ENCODE measurements at regions of chr4 and their contacts with region 1.

Region 1: GRCh38 chr4:153318696-153319320 is 25.7 kb upstream of the MND1 start:
- DNase-seq: peak; percentile 40
- ATAC-seq: peak; percentile 58
- H3K4me3 Mint-ChIP-seq: no peak overlapping the region
- H3K27ac Mint-ChIP-seq: no peak overlapping the region
- H3K4me1 Mint-ChIP-seq: no peaks in the 10 kb centered on the region
- H3K27me3 Mint-ChIP-seq: no peaks in the 10 kb centered on the region

Region 2: GRCh38 chr4:152850377-152850776 is 468.4 kb before region 1 on chr4:
- CTCF ChIA-PET with region 1: interaction called, 3 read pairs
- POLR2A ChIA-PET with region 1: no interaction called
- intact Hi-C with region 1: loop called in 1 of 2 experiments (anchors 5 kb)
- DNase-seq: peak; percentile 64
- ATAC-seq: peak; percentile 69
- H3K4me3 Mint-ChIP-seq: no peak overlapping the region
- H3K27ac Mint-ChIP-seq: peak overlapping the region; percentile 40
- H3K4me1 Mint-ChIP-seq: peaks cover 22% of the 10 kb centered on the region
- H3K27me3 Mint-ChIP-seq: no peaks in the 10 kb centered on the region

Region 3: GRCh38 chr4:153142700-153143438 is 175.9 kb before region 1 on chr4:
- CTCF ChIA-PET with region 1: interaction called, 7 read pairs
- POLR2A ChIA-PET with region 1: no interaction called
- intact Hi-C with region 1: loop called (anchors 1 kb)
- DNase-seq: peak; percentile 79
- ATAC-seq: peak; percentile 85
- H3K4me3 Mint-ChIP-seq: no peak overlapping the region
- H3K27ac Mint-ChIP-seq: no peak overlapping the region
- H3K4me1 Mint-ChIP-seq: peaks cover 8% of the 10 kb centered on the region
- H3K27me3 Mint-ChIP-seq: peaks cover 3% of the 10 kb centered on the region

Region 4: DNA sequence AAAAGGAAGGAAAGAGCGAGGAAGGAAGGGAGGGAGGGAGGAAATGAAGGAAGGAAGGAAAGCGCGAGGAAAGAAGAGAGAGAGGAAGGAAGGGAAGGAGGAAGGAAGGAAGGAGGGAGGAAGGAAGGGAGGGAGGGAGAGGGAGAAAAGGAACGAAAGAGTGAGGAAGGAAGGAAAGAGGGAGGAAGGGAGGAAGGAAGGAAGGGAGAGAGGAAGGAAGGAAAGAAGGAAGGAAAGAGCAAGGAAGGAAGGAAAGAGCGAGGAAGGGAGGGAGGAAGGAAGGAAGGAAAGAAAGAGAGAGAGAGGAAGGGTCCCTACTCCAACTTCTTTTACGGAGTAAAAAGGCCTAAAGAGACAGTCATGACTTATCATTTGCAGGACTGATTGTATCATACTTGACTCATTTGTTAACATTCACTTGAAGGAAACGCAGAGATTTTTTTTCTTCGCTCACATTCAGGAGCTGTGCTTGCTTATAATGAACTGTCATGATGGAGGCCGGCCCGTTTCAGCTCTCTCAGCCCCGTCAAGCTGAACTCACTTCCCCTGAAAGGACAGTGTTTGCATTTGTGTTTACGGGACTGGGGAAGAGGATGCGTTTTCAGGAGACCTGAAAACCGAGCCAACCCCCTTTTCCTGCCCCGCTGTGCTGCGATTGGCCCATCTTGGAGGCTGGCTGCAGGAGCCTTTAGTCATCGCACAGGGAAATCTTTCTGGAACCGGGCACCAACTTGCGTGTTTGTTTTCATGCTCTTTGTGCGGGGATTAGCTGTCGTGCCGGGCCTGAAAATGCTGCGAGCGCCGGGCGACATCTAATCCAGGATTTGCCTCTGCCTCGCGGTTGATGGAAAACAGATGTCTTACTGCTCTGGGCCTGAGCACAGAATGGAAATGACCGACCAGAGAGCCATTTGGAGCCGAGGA is 96.8 kb before region 1 on chr4:
- CTCF ChIA-PET with region 1: no interaction called
- POLR2A ChIA-PET with region 1: no interaction called
- intact Hi-C with region 1: loop called in 1 of 2 experiments (anchors 5 kb)
- DNase-seq: peak; percentile 64
- ATAC-seq: peak; percentile 87
- H3K4me3 Mint-ChIP-seq: peak overlapping the region; percentile 76
- H3K27ac Mint-ChIP-seq: peak overlapping the region; percentile 71
- H3K4me1 Mint-ChIP-seq: peaks cover 35% of the 10 kb centered on the region
- H3K27me3 Mint-ChIP-seq: peaks cover 6% of the 10 kb centered on the region

Region 5: DNA sequence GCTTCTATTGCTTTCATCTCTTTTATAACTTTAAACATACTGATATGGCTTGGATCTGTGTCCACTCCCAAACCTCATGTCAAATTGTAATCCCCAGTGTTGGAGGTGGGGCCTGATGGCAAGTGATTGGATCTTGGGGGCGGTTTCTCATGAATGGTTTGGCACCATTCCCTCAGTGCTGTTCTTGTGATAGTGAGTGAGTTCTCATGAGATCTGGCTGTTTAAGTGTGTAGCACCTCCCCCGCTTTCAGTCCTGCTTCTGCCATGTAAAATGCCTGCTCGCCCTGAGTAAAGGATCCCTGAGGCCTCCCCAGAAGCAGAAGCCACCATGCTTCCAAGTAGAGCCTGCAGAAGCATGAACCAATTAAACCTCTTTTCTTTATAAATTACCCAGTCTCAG is 43.4 kb after region 1 on chr4:
- CTCF ChIA-PET with region 1: no interaction called
- POLR2A ChIA-PET with region 1: no interaction called
- intact Hi-C with region 1: no loop called
- DNase-seq: no peak
- ATAC-seq: no peak
- H3K4me3 Mint-ChIP-seq: no peak overlapping the region
- H3K27ac Mint-ChIP-seq: no peak overlapping the region
- H3K4me1 Mint-ChIP-seq: peaks cover 10% of the 10 kb centered on the region
- H3K27me3 Mint-ChIP-seq: no peaks in the 10 kb centered on the region

Measured in activated CD4-positive, alpha-beta T cell treated with anti-CD3 and anti-CD28 coated beads for 36 hours (primary cell).